CD8-positive, alpha-beta T cell (primary cell): ENCODE measurements at regions of chr2 and their contacts with region 1.

Region 1: GRCh38 chr2:157296490-157297357 is 28.9 kb downstream of the ERMN start:
- DNase-seq: no peak
- ATAC-seq: no peak
- H3K4me3 ChIP-seq: no peak overlapping the region
- H3K4me3 Mint-ChIP-seq: no peak overlapping the region
- H3K27ac ChIP-seq: no peak overlapping the region
- H3K27ac Mint-ChIP-seq: no peak overlapping the region
- H3K4me1 ChIP-seq: no peaks in the 10 kb centered on the region
- H3K4me1 Mint-ChIP-seq: no peaks in the 10 kb centered on the region
- H3K27me3 ChIP-seq: no peaks in the 10 kb centered on the region
- H3K27me3 Mint-ChIP-seq: peaks cover 2% of the 10 kb centered on the region
- CTCF ChIP-seq: no peak

Region 2: GRCh38 chr2:157761520-157761919 is 464.8 kb after region 1 on chr2:
- CTCF ChIA-PET with region 1: interaction called, 3 read pairs
- POLR2A ChIA-PET with region 1: no interaction called
- intact Hi-C with region 1: loop called in 1 of 2 experiments (anchors 5 kb)
- DNase-seq: no peak
- ATAC-seq: no peak
- H3K4me3 ChIP-seq: no peak overlapping the region
- H3K4me3 Mint-ChIP-seq: no peak overlapping the region
- H3K27ac ChIP-seq: no peak overlapping the region
- H3K27ac Mint-ChIP-seq: no peak overlapping the region
- H3K4me1 ChIP-seq: no peaks in the 10 kb centered on the region
- H3K4me1 Mint-ChIP-seq: no peaks in the 10 kb centered on the region
- H3K27me3 ChIP-seq: no peaks in the 10 kb centered on the region
- H3K27me3 Mint-ChIP-seq: no peaks in the 10 kb centered on the region
- CTCF ChIP-seq: no peak

Region 3: DNA sequence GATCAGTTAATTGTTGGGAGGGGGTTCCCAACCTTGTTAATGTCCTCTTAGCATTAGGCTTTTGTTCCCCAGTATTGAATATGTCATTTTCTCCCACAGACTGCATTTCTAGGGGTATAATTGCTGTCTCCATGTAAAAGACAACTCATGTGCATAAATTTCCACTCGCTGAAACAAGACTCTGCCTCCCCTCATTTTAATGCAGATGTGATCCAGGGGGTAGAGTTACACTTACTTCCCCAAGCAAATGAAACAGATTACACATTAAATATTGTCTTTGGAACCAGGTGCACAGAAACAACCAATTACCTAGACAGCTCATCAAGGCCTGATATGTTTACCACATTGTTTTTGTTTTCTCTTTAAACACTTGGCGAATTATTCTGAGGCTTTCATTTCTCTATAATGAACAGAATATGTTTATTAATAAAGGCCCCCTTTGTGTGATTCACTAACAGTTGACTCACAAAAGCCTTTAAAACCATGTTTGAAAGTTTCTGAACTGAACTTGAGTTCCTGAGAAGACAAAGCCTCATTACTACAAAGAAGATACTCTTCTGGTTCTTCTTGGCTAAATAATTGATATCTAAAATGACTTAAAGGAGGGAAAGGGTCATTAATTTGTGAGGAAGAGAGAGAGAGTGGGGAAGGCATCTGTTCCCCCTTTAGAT is 594.4 kb after region 1 on chr2:
- CTCF ChIA-PET with region 1: no interaction called
- POLR2A ChIA-PET with region 1: no interaction called
- intact Hi-C with region 1: no loop called
- DNase-seq: no peak
- ATAC-seq: no peak
- H3K4me3 ChIP-seq: no peak overlapping the region
- H3K4me3 Mint-ChIP-seq: peak overlapping the region; percentile 52
- H3K27ac ChIP-seq: no peak overlapping the region
- H3K27ac Mint-ChIP-seq: peak overlapping the region; percentile 72
- H3K4me1 ChIP-seq: peaks cover 19% of the 10 kb centered on the region
- H3K4me1 Mint-ChIP-seq: peaks cover 34% of the 10 kb centered on the region
- H3K27me3 ChIP-seq: no peaks in the 10 kb centered on the region
- H3K27me3 Mint-ChIP-seq: no peaks in the 10 kb centered on the region
- CTCF ChIP-seq: no peak